ENCODE measurements at regions of chr11 and their contacts with region 1.

Region 1: DNA sequence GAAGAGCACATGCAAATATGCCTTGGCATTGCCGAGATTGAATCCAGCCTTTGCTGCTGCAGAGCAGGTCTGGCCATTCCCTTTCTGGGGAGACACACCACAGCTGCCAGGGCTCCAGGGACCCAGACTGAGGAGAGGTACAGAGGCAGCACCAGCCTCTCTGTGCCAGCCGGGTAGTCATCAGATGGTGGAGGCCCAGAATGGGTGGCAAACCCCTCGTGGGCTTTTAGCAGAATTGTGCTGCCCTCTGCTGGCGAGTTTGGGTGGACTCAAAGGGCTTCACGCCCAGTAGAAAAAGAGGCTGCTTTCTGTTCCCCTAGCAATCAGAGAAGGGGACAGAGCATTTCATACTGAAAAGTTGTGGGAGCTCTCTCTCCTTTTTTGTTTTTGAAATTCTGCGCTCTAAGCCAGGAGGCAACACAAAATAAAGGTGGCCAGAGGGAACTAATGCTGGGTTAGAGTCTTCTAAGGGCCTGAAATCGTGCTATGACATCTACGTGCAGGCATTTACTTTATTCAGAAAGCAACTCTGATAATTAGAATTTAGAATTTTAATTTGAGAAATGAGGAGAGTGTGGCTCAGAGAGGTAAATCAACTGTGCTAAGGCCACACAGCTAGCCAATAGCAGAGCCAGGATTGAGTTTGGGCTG is 158.8 kb upstream of the NAV2 start:
- DNase-seq: peak; percentile 71 to 95
- H3K4me3 ChIP-seq: no peak overlapping the region
- CTCF ChIP-seq: peak in 1 of 3 donors; percentile 71
- POLR2A ChIP-seq: no peak

Region 2: GRCh38 chr11:19071255-19071654 is 482.6 kb before region 1 on chr11:
- intact Hi-C with region 1: loop called (anchors 2 kb)
- DNase-seq: peak; percentile 41 to 87
- H3K4me3 ChIP-seq: no peak overlapping the region
- CTCF ChIP-seq: peak in 1 of 3 donors; percentile 76
- POLR2A ChIP-seq: no peak

Measured in lower leg skin (tissue), 4 donors.